ENCODE measurements at regions of chr17 and their contacts with region 1.

Region 1: DNA sequence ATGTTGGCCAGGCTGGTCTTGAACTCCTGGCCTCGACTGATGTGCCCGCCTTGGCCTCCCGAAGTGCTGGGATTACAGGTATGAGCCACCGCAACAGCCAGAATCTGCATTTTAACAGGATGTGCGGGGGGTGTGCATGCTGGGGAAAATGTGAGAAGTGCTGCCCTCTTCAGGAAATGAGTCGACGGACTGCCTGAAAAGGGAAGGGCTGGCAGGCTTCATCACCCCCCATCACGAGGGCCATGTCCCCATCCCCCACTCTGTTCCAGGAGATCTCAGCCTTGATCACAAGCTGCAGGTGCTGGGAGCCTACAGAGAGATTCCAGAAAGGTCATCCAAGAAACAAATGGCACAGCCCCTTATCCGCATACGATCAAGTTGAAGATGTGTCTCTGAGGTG is 195.3 kb upstream of the RPL38 start:
- DNase-seq: peak; percentile 79
- ATAC-seq: peak; percentile 82
- H3K4me3 Mint-ChIP-seq: no peak overlapping the region
- H3K27ac Mint-ChIP-seq: no peak overlapping the region
- H3K4me1 Mint-ChIP-seq: peaks cover 21% of the 10 kb centered on the region
- H3K27me3 Mint-ChIP-seq: peaks cover 13% of the 10 kb centered on the region

Region 2: DNA sequence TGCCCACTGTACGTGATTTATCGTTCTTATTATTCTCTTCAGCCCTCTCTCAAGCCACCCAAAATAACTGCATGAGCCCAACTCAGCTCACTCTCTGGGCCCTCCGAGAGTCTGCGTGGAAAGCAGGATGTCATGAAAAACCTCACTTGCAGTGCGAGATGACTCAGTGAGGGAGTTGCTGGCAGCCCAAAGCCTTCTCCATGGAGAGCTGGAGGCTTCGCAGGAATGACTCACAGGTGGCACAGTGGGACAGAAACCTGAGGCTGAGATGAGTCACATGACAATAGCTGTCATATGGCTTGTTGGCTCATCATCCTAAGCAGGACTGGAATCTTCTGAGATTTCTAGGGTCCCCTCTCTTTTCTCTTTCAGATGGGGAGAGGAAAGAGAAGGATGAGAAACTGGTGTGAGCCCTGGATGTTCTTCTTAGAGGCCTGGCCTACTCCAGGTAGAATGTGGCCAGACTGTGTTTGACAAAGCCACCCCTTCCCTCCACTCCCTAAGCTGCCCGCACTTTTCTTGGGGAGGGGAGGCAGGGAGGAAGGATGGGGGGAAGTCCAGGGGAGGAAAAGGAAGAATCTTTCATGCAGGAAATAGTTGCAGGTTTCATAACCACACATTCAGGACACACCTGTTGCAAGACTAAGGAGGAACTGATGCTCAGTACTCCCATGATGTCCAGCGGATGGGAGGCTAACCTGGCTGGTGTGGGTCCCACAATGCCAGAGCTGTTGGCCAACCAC is 34.7 kb after region 1 on chr17:
- CTCF ChIA-PET with region 1: interaction called, 5 read pairs
- POLR2A ChIA-PET with region 1: no interaction called
- intact Hi-C with region 1: loop called in 1 of 2 experiments (anchors 2 kb)
- DNase-seq: peak; percentile 81
- ATAC-seq: peak; percentile 99
- H3K4me3 Mint-ChIP-seq: no peak overlapping the region
- H3K27ac Mint-ChIP-seq: peak overlapping the region; percentile 58
- H3K4me1 Mint-ChIP-seq: peaks cover 9% of the 10 kb centered on the region
- H3K27me3 Mint-ChIP-seq: peaks cover 3% of the 10 kb centered on the region